Heart left ventricle (tissue), 16 donors: ENCODE measurements at regions of chr20 and their contacts with region 1.

Region 1: DNA sequence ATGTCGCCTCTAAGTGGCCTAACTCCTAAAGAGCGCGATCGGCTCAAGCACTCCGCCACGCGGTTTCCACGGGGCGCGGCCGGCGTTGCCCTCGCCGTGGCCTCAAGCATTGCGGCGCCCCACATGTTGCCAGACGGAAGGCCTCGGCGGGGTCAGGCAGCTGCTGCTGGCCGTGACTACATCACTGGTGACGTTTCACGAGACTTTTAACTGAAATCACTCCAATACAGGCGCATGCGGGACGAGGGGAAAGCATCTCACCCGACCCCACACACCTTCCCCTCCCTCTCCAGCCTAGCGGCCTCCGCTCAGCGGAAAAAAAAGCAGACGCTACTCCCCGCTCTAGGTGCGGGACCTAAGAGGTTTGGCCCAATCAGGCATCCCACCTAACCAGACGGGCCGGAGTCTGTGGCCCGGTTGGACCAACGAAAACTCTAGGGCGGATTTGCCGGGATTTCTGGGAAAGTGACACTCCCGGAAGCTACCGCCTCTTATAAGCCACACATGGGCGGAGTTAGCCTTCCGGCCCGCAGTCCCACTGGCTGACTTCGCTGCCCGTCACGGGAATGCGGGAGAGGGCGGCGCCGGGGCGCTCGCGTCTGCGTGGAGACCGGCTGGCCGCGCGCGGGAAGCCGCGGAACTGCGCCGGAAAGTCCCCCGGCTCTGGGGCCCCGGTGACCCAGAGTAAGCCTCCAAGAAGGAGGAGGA is at the start of gene NXT1:
- DNase-seq: peak; percentile 97 to 98 (median 97)
- ATAC-seq: peak; percentile 93 to 96 (median 94)
- H3K4me3 ChIP-seq: peak within 1 kb of the TSS; percentile 63 to 98 (median 90)
- H3K27ac ChIP-seq: peak within 1 kb of the TSS; percentile 93 to 100 (median 98)
- H3K4me1 ChIP-seq: peaks cover 4 to 27% (median 18%) of the 10 kb centered on the region in 12 donors
- H3K27me3 ChIP-seq: no peaks in the 10 kb centered on the region
- CTCF ChIP-seq: no peak
- POLR2A ChIP-seq: peak; percentile 53 to 77
- total RNA-seq, gene NXT1: 4.2 to 13.8 (median 9.1) TPM

Region 2: GRCh38 chr20:22333885-22334545 is 1016.3 kb before region 1 on chr20:
- intact Hi-C with region 1: loop called in 3 of 10 experiments (anchors 5 to 10 kb)
- DNase-seq: peak in 3 of 5 donors; percentile 34 to 44 (median 36)
- ATAC-seq: peak in 3 of 4 donors; percentile 64 to 80 (median 66)
- H3K4me3 ChIP-seq: no peak overlapping the region
- H3K27ac ChIP-seq: no peak overlapping the region
- H3K4me1 ChIP-seq: no peaks in the 10 kb centered on the region
- H3K27me3 ChIP-seq: peaks cover 0 to 82% (median 4%) of the 10 kb centered on the region in 9 donors
- CTCF ChIP-seq: peak; percentile 54 to 79 (median 66)
- POLR2A ChIP-seq: no peak

Region 3: GRCh38 chr20:22453239-22454080 is 896.9 kb before region 1 on chr20:
- intact Hi-C with region 1: loop called in 1 of 10 experiments (anchors 10 kb)
- DNase-seq: no peak
- ATAC-seq: no peak
- H3K4me3 ChIP-seq: no peak overlapping the region
- H3K27ac ChIP-seq: no peak overlapping the region
- H3K4me1 ChIP-seq: no peaks in the 10 kb centered on the region
- H3K27me3 ChIP-seq: peaks cover 0 to 56% (median 9%) of the 10 kb centered on the region in 9 donors
- CTCF ChIP-seq: peak; percentile 30 to 69 (median 50)
- POLR2A ChIP-seq: no peak

Region 4: DNA sequence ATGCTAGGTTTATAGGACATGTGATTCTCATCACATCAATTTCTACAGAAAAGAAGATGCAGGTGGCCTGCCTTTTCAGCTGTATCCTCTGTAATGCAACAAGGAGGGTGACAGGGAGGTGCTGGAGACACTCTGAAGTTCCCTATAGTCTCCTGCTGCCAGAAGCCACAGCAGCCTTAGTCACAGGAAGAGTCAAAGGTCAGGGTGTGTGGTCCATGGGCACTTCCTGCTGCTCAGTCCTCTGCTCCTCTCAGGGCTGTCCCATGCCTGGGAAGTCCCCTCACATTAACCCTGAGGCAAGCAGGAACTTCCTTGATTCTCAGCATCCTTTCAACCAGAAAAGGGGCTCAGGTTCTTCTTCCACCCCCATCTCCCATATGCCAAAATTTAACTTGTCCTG is 621.2 kb before region 1 on chr20:
- intact Hi-C with region 1: loop called in 1 of 10 experiments (anchors 10 kb)
- DNase-seq: no peak
- ATAC-seq: peak in 1 of 4 donors; percentile 38
- H3K4me3 ChIP-seq: no peak overlapping the region
- H3K27ac ChIP-seq: no peak overlapping the region
- H3K4me1 ChIP-seq: peaks cover 0 to 6% (median 0%) of the 10 kb centered on the region in 12 donors
- H3K27me3 ChIP-seq: no peaks in the 10 kb centered on the region
- CTCF ChIP-seq: no peak
- POLR2A ChIP-seq: no peak

Region 5: DNA sequence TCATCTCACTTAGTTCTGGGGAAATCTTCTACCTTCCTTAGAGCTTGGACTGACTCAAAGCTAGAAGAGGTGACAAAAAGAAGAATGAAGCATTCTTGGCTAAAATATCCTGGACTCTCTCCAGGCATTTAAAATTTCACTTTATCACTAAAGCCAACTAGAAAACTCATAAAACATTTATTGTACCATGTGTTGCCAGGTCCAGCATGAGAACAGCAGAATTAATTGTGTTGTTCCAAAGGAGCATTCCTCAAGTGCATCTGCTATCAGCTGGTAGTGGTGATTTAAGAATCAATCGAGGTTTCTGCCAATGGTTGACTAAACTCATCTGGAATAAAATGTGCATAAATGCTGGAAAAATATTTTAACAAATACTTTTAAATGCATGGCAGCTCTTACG is 462.6 kb before region 1 on chr20:
- intact Hi-C with region 1: no loop called
- DNase-seq: no peak
- ATAC-seq: no peak
- H3K4me3 ChIP-seq: no peak overlapping the region
- H3K27ac ChIP-seq: no peak overlapping the region
- H3K4me1 ChIP-seq: no peaks in the 10 kb centered on the region
- H3K27me3 ChIP-seq: peaks cover 0 to 7% (median 0%) of the 10 kb centered on the region in 9 donors
- CTCF ChIP-seq: no peak
- POLR2A ChIP-seq: no peak

Region 6: DNA sequence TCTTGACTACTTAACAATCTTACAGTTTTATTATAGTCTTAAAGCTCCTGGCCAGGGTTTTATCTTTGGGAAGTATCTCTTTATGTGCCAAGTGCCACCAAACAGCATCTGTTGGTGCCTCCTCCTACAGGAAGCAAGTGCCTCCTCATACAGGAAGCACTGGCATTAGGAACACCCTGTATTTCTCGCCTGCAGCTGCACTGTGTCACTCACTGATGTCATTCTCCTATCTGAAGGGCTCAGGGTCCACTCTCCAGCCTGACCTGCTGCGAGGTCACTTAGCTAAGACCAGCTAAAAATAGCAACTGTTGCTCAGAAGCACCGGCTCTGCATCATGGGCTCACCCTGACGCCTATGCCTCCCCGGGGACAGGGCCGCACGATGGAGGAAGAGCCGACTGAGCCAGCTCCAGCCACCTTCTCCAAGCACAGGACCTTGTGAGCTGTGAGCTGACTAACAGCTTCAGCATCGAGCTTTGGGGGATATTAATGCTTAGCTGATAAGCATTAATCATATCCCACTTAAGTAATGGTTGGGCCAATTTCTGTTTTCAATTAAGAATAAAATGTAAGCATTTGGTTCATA is 197.9 kb before region 1 on chr20:
- intact Hi-C with region 1: loop called in 1 of 10 experiments (anchors 10 kb)
- DNase-seq: peak; percentile 87 to 95 (median 87)
- ATAC-seq: peak; percentile 94 to 96 (median 94)
- H3K4me3 ChIP-seq: no peak overlapping the region
- H3K27ac ChIP-seq: peak overlapping the region; percentile 58 to 89 (median 81)
- H3K4me1 ChIP-seq: peaks cover 3 to 93% (median 58%) of the 10 kb centered on the region in 12 donors
- H3K27me3 ChIP-seq: no peaks in the 10 kb centered on the region
- CTCF ChIP-seq: peak in 1 of 12 donors; percentile 18
- POLR2A ChIP-seq: peak in 1 of 2 donors; percentile 29

Region 7: DNA sequence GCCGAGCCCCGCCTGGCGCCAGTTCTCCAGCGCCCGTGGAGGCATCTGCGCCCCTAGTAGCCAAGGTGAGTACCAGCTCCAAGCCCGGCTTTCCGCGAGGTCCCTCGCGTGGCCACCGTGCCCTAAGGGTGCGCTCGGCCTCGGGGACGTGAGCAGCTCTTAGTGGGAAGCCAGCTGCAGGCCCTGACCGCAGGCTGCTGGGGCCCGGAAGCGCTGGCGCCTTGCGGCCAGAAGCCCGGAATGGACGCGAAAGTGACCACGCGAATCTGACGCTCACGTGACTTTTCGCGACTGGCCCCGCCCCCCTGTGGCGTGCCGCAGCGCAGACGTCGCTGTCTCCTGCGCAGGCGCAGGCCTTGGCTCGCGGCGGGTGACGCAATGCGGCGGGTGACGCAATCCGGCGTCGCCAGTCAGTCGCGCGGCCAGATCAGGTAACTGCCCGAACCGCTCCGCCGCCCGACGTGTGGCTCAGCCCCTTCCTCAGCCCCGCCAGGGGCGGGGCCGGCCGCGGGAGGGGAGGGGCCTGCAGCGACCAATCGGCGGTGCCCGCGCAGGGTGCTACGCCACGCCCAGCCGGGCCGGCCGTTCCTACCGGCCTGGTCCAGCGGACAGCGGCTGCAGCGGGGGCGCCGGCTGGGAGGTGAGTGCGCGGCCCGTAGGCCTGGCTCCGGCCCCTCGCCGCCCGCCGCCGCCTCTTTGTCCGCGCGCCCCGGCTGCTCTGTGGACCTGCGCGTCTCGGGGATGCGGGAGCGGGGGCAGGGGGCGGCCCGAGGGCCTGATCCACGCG is 11.4 kb after region 1 on chr20 and contains the start of gene GZF1:
- intact Hi-C with region 1: loop called in 1 of 10 experiments (anchors 1 kb)
- DNase-seq: peak; percentile 98 to 99 (median 99)
- ATAC-seq: peak; percentile 82 to 93 (median 86)
- H3K4me3 ChIP-seq: peak within 1 kb of the TSS; percentile 69 to 94 (median 86)
- H3K27ac ChIP-seq: peak within 1 kb of the TSS; percentile 95 to 100 (median 100)
- H3K4me1 ChIP-seq: peaks cover 3 to 77% (median 56%) of the 10 kb centered on the region in 12 donors
- H3K27me3 ChIP-seq: no peaks in the 10 kb centered on the region
- CTCF ChIP-seq: peak in 7 of 12 donors; percentile 5 to 23 (median 15)
- POLR2A ChIP-seq: peak; percentile 87 to 89
- total RNA-seq, gene GZF1: 16.5 to 34.6 (median 27.9) TPM

Region 8: DNA sequence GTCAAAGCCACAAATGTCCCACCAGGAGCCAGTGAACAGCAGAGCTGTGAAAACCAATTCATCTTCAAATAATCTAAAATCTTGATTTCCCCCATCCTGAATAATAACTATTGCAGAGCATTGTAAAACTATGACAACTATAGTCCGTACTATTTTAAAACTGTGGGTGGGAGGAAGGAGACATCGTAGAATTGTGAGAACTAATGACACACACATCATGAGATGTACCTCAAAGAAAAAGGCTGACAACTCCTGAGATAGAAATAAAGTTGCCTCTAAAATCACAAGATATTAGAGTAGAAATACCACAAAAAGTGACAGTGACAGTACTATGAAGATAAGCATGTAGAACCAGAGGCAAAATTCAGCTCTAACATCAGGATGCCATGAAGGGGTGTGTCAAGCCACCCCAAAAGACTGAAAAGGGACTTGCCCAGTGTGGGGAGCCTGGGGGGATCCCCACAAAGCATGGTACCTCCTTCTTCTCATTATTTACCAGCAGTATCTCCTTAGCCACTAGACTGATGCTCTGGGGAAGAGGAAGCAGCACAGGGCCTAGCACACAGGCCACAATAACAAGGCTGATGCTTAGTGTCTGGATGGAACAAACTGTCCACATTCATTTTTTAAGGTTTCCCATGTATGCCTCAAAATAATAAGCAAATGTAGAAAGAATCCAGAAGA is 57.6 kb after region 1 on chr20:
- intact Hi-C with region 1: no loop called
- DNase-seq: no peak
- ATAC-seq: no peak
- H3K4me3 ChIP-seq: no peak overlapping the region
- H3K27ac ChIP-seq: no peak overlapping the region
- H3K4me1 ChIP-seq: peaks cover 0 to 61% (median 34%) of the 10 kb centered on the region in 12 donors
- H3K27me3 ChIP-seq: no peaks in the 10 kb centered on the region
- CTCF ChIP-seq: no peak
- POLR2A ChIP-seq: no peak

Region 9: DNA sequence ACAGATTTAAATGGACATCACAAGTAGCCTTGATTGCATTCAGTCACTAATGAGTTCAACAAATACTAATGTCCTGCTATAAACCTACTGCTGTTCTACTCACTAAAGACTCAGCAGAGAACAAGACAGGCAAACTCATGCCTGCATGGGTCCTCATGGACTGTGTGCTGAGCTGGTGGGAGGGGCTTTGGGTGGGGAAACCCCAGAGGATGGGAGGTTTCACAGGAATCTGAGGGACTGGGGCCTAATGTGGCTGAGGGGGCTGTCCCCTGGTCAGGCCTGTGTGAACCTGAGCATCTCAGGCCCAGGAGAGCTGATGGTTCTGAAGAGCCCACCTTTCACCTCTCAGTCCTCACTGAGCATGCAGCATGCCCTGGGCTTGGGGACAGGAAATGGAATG is 141.9 kb after region 1 on chr20:
- intact Hi-C with region 1: no loop called
- DNase-seq: no peak
- ATAC-seq: no peak
- H3K4me3 ChIP-seq: no peak overlapping the region
- H3K27ac ChIP-seq: no peak overlapping the region
- H3K4me1 ChIP-seq: no peaks in the 10 kb centered on the region
- H3K27me3 ChIP-seq: no peaks in the 10 kb centered on the region
- CTCF ChIP-seq: no peak
- POLR2A ChIP-seq: no peak

Region 10: DNA sequence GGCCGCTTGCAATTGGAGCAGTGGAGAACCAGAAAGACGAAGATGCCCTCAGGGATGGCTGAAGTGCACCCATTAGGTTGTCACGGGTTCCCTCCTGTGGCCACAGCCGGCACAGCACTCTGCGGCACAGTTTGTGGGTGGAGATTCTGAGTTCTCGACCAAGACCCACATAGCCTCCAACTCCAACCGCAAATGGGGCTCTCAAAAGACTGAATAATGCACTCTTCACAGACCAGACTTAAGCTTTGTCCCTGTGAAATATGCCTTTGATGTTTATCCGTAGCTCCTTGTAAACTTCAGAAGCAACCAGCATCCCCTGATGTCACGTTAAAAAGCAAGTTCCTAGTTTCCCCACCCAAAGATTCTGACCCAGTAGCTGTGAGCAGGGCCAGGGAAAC is 256.3 kb after region 1 on chr20:
- intact Hi-C with region 1: loop called in 4 of 10 experiments (anchors 5 to 10 kb)
- DNase-seq: peak; percentile 69 to 88 (median 77)
- ATAC-seq: peak; percentile 71 to 95 (median 90)
- H3K4me3 ChIP-seq: no peak overlapping the region
- H3K27ac ChIP-seq: no peak overlapping the region
- H3K4me1 ChIP-seq: peaks cover 0 to 13% (median 0%) of the 10 kb centered on the region in 12 donors
- H3K27me3 ChIP-seq: peaks cover 0 to 8% (median 0%) of the 10 kb centered on the region in 9 donors
- CTCF ChIP-seq: peak; percentile 71 to 92 (median 88)
- POLR2A ChIP-seq: no peak